ENCODE measurements at regions of chr2 and their contacts with region 1.

Region 1: GRCh38 chr2:180604077-180604476 is 376.3 kb upstream of the UBE2E3 start:
- DNase-seq: peak in 1 of 2 experiments; percentile 19
- H3K4me3 ChIP-seq: no peak overlapping the region
- H3K4me3 Mint-ChIP-seq: no peak overlapping the region
- H3K27ac Mint-ChIP-seq: no peak overlapping the region
- H3K4me1 ChIP-seq: no peaks in the 10 kb centered on the region
- H3K4me1 Mint-ChIP-seq: peaks cover 7% of the 10 kb centered on the region
- H3K27me3 ChIP-seq: no peaks in the 10 kb centered on the region
- H3K27me3 Mint-ChIP-seq: no peaks in the 10 kb centered on the region
- CTCF ChIP-seq: peak; percentile 41 to 49

Region 2: GRCh38 chr2:180761224-180761623 is 157.1 kb after region 1 on chr2:
- CTCF ChIA-PET with region 1: no interaction called
- POLR2A ChIA-PET with region 1: no interaction called
- intact Hi-C with region 1: loop called (anchors 10 kb)
- DNase-seq: no peak
- H3K4me3 ChIP-seq: no peak overlapping the region
- H3K4me3 Mint-ChIP-seq: no peak overlapping the region
- H3K27ac Mint-ChIP-seq: no peak overlapping the region
- H3K4me1 ChIP-seq: no peaks in the 10 kb centered on the region
- H3K4me1 Mint-ChIP-seq: peaks cover 4% of the 10 kb centered on the region
- H3K27me3 ChIP-seq: no peaks in the 10 kb centered on the region
- H3K27me3 Mint-ChIP-seq: no peaks in the 10 kb centered on the region
- CTCF ChIP-seq: no peak

Region 3: GRCh38 chr2:180790891-180791290 is 186.8 kb after region 1 on chr2:
- CTCF ChIA-PET with region 1: no interaction called
- POLR2A ChIA-PET with region 1: no interaction called
- intact Hi-C with region 1: loop called (anchors 10 kb)
- DNase-seq: no peak
- H3K4me3 ChIP-seq: no peak overlapping the region
- H3K4me3 Mint-ChIP-seq: no peak overlapping the region
- H3K27ac Mint-ChIP-seq: no peak overlapping the region
- H3K4me1 ChIP-seq: no peaks in the 10 kb centered on the region
- H3K4me1 Mint-ChIP-seq: no peaks in the 10 kb centered on the region
- H3K27me3 ChIP-seq: no peaks in the 10 kb centered on the region
- H3K27me3 Mint-ChIP-seq: peaks cover 3% of the 10 kb centered on the region
- CTCF ChIP-seq: no peak

Measured in Caco-2 (cell line).